Right ventricle myocardium inferior (tissue), 1 donor: ENCODE measurements at regions of chr11 and their contacts with region 1.

Region 1: GRCh38 chr11:6531267-6531752 is 34.2 kb downstream of the DNHD1 start:
- DNase-seq: no peak
- ATAC-seq: peak; percentile 48

Region 2: GRCh38 chr11:6603287-6604080 is 72.2 kb after region 1 on chr11 and contains the starts of genes ILK and RRP8:
- intact Hi-C with region 1: loop called (anchors 5 kb)
- DNase-seq: peak; percentile 96
- ATAC-seq: peak; percentile 90
- total RNA-seq, gene ILK: 233 TPM
- total RNA-seq, gene RRP8: 22.9 TPM

Region 3: GRCh38 chr11:6667733-6668374 is 136.5 kb after region 1 on chr11:
- intact Hi-C with region 1: loop called (anchors 5 kb)
- DNase-seq: no peak
- ATAC-seq: peak; percentile 60

Region 4: GRCh38 chr11:6705905-6706535 is 174.7 kb after region 1 on chr11:
- intact Hi-C with region 1: loop called (anchors 1 kb)
- DNase-seq: no peak
- ATAC-seq: peak; percentile 60

Region 5: GRCh38 chr11:6757373-6757967 is 226.2 kb after region 1 on chr11:
- intact Hi-C with region 1: loop called (anchors 5 kb)
- DNase-seq: no peak
- ATAC-seq: peak; percentile 60

Region 6: GRCh38 chr11:6895010-6895409 is 363.7 kb after region 1 on chr11:
- intact Hi-C with region 1: no loop called
- DNase-seq: no peak
- ATAC-seq: no peak